Posterior cingulate gyrus (tissue), 11 donors: ENCODE measurements at regions of chr3 and their contacts with region 1.

Region 1: GRCh38 chr3:180989291-180990163 is at the start of gene DNAJC19:
- DNase-seq: peak; percentile 88 to 98 (median 92)

Region 2: DNA sequence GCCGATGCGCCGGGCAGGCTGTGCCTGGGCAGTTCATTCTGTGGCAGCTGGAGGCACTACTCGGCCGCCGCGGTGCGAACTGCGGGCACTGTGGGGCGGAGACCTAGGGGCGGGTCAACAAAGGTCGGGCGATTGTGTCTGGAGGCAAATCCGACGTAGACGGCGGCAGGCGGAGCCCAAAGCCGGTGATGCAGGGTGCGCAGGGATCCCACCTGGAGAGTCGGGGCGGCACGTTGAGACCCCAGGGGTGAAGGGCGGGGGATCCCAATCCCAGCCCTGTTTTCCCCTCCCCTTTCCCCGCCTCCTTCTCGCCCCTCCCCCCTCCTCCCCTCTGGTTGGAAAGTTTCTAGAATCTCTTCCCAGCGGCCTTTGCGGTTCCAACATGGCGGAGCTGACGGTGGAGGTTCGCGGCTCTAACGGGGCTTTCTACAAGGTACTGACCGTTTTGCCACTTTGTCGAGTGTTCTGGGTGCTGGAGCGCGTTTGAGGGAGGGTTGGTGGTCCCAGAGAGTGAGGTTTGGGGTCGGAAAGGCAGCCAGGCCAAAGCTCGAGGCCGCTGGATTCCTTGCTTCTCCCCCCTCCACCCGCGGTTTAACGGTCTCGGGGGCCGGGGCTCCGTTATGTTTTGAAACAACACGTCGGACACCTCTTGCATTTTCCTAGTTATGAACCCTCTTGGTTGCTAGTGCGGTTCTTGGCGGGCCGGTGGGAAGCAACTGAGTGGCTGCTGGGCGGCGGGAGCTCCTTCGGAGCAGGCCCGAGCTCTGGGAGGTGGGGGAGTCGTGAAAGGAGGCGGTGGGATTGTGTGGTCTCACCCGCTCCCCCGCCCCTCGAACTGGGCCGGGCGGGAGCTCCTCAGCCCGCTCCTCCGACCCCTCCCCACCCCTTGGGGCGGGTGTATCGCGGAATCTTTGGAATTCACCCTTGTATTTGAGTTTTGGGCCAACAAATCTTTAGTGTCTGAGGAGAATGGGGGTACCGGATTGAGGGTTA is 76.9 kb before region 1 on chr3 and contains the start of gene FXR1:
- intact Hi-C with region 1: loop called (anchors 2 kb)
- DNase-seq: peak; percentile 83 to 98 (median 90)